ENCODE measurements at regions of chr9 and their contacts with region 1.

Region 1: GRCh38 chr9:35903049-35903448 is 3.0 kb upstream of the HRCT1 start:
- DNase-seq: no peak
- H3K4me3 Mint-ChIP-seq: no peak overlapping the region
- H3K27ac Mint-ChIP-seq: no peak overlapping the region
- H3K4me1 Mint-ChIP-seq: peaks cover 12% of the 10 kb centered on the region
- H3K27me3 Mint-ChIP-seq: peaks cover 22% of the 10 kb centered on the region

Region 2: GRCh38 chr9:35945341-35946018 is 42.4 kb after region 1 on chr9:
- intact Hi-C with region 1: loop called (anchors 1 kb)
- DNase-seq: peak; percentile 40
- H3K4me3 Mint-ChIP-seq: no peak overlapping the region
- H3K27ac Mint-ChIP-seq: no peak overlapping the region
- H3K4me1 Mint-ChIP-seq: peaks cover 12% of the 10 kb centered on the region
- H3K27me3 Mint-ChIP-seq: peaks cover 15% of the 10 kb centered on the region